ENCODE measurements at regions of chr21 and their contacts with region 1.

Region 1: GRCh38 chr21:44657635-44658540 is at the start of gene KRTAP12-3:
- DNase-seq: peak; percentile 85 to 92 (median 87)
- H3K4me3 ChIP-seq: peak within 1 kb of the TSS; percentile 4 to 32
- H3K4me3 Mint-ChIP-seq: peak within 1 kb of the TSS; percentile 73 to 83 (median 78)
- H3K27ac ChIP-seq: peak within 1 kb of the TSS; percentile 64
- H3K27ac Mint-ChIP-seq: peak within 1 kb of the TSS; percentile 94 to 99 (median 98)
- H3K4me1 ChIP-seq: peaks cover 68% of the 10 kb centered on the region
- H3K4me1 Mint-ChIP-seq: peaks cover 53 to 78% (median 64%) of the 10 kb centered on the region in 4 donors
- H3K27me3 ChIP-seq: no peaks in the 10 kb centered on the region
- H3K27me3 Mint-ChIP-seq: no peaks in the 10 kb centered on the region
- total RNA-seq, gene KRTAP12-3: not detected

Region 2: DNA sequence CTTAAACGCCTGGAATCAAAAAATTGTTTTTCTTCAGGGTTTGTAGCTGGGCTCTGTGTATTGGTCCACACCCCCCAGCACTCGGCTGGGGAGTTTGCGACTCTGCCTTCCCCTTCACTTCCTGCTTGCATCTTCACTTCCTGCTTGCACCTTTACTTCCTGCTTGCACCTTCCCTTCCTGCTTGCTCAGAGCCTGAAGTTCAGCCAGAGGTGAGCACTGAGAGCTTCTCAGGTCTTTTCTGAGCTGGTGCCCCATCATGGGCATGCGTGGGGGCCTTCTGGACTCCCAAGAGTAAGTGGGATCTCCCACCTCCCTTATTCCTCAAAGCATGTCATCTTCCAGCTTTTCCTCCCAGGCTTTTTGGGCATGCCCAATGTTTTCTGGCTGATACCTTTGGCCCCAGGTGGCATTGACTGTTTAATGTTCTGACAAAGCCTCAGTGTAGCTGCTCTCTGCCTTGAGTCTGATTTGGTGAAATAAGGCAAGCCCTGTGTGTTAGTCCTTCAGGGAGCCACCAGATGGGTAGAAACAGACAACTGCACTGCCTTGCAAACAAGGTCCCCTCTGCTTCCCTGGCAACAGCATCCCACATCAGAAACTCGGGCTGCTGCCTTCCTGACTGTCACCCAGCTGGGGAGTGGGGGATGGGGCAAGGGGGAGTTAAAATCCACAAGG is 110.1 kb before region 1 on chr21:
- CTCF ChIA-PET with region 1: interaction called, 3 read pairs
- POLR2A ChIA-PET with region 1: interaction called, 36 read pairs
- intact Hi-C with region 1: no loop called
- DNase-seq: peak; percentile 43 to 58 (median 50)
- H3K4me3 ChIP-seq: peak overlapping the region in 1 of 2 donors; percentile 35
- H3K4me3 Mint-ChIP-seq: peak overlapping the region; percentile 76 to 86 (median 82)
- H3K27ac ChIP-seq: no peak overlapping the region
- H3K27ac Mint-ChIP-seq: peak overlapping the region; percentile 82 to 95 (median 87)
- H3K4me1 ChIP-seq: peaks cover 20% of the 10 kb centered on the region
- H3K4me1 Mint-ChIP-seq: peaks cover 19 to 35% (median 28%) of the 10 kb centered on the region in 4 donors
- H3K27me3 ChIP-seq: no peaks in the 10 kb centered on the region
- H3K27me3 Mint-ChIP-seq: no peaks in the 10 kb centered on the region

Region 3: GRCh38 chr21:44583089-44583799 is 74.6 kb before region 1 on chr21:
- CTCF ChIA-PET with region 1: no interaction called
- POLR2A ChIA-PET with region 1: interaction called, 4 read pairs
- intact Hi-C with region 1: loop called (anchors 2 kb)
- DNase-seq: no peak
- H3K4me3 ChIP-seq: no peak overlapping the region
- H3K4me3 Mint-ChIP-seq: peak overlapping the region in 2 of 8 donors; percentile 12 to 33
- H3K27ac ChIP-seq: no peak overlapping the region
- H3K27ac Mint-ChIP-seq: peak overlapping the region in 2 of 7 donors; percentile 8 to 36
- H3K4me1 ChIP-seq: peaks cover 5% of the 10 kb centered on the region
- H3K4me1 Mint-ChIP-seq: peaks cover 13 to 21% (median 16%) of the 10 kb centered on the region in 4 donors
- H3K27me3 ChIP-seq: no peaks in the 10 kb centered on the region
- H3K27me3 Mint-ChIP-seq: peaks cover 11 to 15% of the 10 kb centered on the region in 2 donors

Region 4: DNA sequence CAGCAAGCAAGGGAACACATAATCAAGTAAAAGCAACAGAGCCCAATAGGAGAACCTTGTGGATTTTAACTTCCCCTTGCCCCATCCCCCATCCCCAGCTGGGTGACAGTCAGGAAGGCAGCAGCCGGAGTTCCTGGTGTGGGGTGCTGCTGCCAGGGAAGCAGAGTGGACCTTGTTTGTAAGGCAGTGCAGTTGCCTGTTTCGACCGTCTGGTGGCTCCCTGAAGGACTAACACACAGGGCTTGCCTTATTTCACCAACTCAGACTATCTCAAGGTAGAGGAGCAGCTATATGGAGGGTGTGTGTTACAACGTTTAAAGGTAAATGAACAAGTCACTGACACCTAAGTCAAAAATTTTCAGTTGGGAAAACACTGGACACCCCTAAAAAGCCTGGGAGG is 39.4 kb before region 1 on chr21:
- CTCF ChIA-PET with region 1: interaction called, 11 read pairs
- POLR2A ChIA-PET with region 1: interaction called, 89 read pairs
- intact Hi-C with region 1: loop called (anchors 1 kb)
- DNase-seq: no peak
- H3K4me3 ChIP-seq: peak overlapping the region in 1 of 2 donors; percentile 12
- H3K4me3 Mint-ChIP-seq: peak overlapping the region; percentile 39 to 81 (median 68)
- H3K27ac ChIP-seq: peak overlapping the region; percentile 40
- H3K27ac Mint-ChIP-seq: peak overlapping the region; percentile 83 to 96 (median 93)
- H3K4me1 ChIP-seq: peaks cover 43% of the 10 kb centered on the region
- H3K4me1 Mint-ChIP-seq: peaks cover 31 to 60% (median 48%) of the 10 kb centered on the region in 4 donors
- H3K27me3 ChIP-seq: no peaks in the 10 kb centered on the region
- H3K27me3 Mint-ChIP-seq: no peaks in the 10 kb centered on the region

Region 5: GRCh38 chr21:44647222-44647552 is 10.7 kb before region 1 on chr21:
- CTCF ChIA-PET with region 1: interaction called, 4 read pairs
- POLR2A ChIA-PET with region 1: interaction called, 16 read pairs
- intact Hi-C with region 1: no loop called
- DNase-seq: no peak
- H3K4me3 ChIP-seq: no peak overlapping the region
- H3K4me3 Mint-ChIP-seq: no peak overlapping the region
- H3K27ac ChIP-seq: no peak overlapping the region
- H3K27ac Mint-ChIP-seq: peak overlapping the region in 1 of 7 donors; percentile 13
- H3K4me1 ChIP-seq: no peaks in the 10 kb centered on the region
- H3K4me1 Mint-ChIP-seq: peaks cover 0 to 7% (median 4%) of the 10 kb centered on the region in 4 donors
- H3K27me3 ChIP-seq: no peaks in the 10 kb centered on the region
- H3K27me3 Mint-ChIP-seq: no peaks in the 10 kb centered on the region

Region 6: DNA sequence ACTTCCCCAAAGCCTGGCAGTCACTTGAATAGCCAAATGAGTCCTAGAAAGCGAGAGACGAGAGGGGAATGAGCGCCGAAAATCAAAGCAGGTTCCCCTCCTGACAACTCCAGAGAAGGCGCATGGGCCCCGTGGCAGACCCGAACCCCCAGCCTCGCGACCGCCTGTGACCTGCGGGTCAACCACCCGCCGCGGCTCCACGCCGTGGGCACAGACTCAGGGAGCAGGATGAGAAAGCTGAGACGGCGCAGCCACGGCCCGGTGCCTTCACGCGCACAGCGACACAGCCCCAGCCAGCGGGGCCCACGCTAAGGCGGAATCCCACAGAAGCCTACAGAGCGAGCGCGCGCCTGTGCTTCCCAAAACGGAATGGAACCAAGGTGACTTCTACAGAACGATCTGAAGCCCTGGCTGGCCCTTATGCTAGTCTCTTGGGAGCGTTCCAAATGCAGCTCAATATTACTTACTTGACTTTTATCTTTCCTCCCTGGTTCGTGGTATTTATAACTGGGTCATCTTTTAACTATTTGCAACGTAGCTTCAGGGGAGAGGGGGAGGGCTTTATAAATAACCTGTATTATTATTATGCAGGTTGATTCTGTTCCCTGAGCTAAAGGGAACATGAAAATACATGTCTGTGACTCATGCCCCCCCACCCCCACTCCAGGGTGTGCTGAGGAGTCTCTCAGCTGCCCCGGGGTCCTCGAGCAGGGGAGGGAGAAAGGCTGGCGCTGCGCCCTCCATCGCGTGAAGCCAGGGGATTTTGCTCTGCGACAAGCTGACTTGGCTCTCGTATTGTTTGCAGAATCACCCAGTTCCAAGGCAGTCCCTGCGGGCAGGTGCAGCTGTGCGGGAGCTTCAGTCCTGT is 51.8 kb after region 1 on chr21:
- CTCF ChIA-PET with region 1: no interaction called
- POLR2A ChIA-PET with region 1: interaction called, 16 read pairs
- intact Hi-C with region 1: loop called (anchors 2 kb)
- DNase-seq: peak in 4 of 5 donors; percentile 15 to 37 (median 24)
- H3K4me3 ChIP-seq: peak overlapping the region in 1 of 2 donors; percentile 24
- H3K4me3 Mint-ChIP-seq: peak overlapping the region; percentile 44 to 80 (median 68)
- H3K27ac ChIP-seq: no peak overlapping the region
- H3K27ac Mint-ChIP-seq: peak overlapping the region in 3 of 7 donors; percentile 19 to 67 (median 35)
- H3K4me1 ChIP-seq: peaks cover 39% of the 10 kb centered on the region
- H3K4me1 Mint-ChIP-seq: peaks cover 18 to 45% (median 31%) of the 10 kb centered on the region in 4 donors
- H3K27me3 ChIP-seq: peaks cover 68% of the 10 kb centered on the region
- H3K27me3 Mint-ChIP-seq: peaks cover 66 to 69% of the 10 kb centered on the region in 2 donors

Region 7: DNA sequence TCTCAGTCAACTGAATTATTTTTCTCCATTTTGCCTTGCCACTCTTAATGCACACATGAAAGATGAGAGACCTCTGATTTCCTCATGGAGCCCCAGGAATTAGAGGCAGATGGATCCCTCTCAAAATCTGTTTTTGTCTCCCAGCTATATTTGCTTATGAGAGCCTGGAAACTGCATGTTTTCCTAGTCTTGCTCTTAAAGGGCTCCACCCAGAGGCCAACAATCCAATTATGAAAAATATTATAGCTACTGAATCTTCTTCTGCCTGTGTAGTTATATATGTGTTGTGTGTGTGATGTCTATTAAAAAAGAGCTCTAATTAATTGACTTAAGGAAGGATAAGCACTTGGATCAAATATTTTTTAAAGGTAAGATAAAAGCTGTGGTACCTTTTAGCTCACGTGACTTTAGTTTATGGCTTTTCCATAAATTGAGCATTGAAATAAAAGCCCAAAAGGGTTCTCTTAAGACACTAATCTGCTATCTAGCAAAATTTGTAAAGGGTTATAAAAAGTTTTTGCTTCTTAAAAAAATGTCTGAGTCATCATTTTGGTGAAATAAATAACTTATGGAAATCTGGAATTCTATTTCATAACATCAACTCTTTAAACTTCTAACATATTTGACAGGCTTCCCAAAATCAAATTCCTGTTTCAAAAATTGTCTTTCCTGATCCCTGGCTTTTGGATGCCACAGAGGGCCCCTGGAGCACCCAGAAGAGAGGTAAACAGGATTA is 84.7 kb after region 1 on chr21:
- CTCF ChIA-PET with region 1: interaction called, 22 read pairs
- POLR2A ChIA-PET with region 1: interaction called, 11 read pairs
- intact Hi-C with region 1: no loop called
- DNase-seq: peak in 4 of 5 donors; percentile 40 to 54 (median 47)
- H3K4me3 ChIP-seq: no peak overlapping the region
- H3K4me3 Mint-ChIP-seq: no peak overlapping the region
- H3K27ac ChIP-seq: no peak overlapping the region
- H3K27ac Mint-ChIP-seq: peak overlapping the region in 4 of 7 donors; percentile 48 to 83 (median 79)
- H3K4me1 ChIP-seq: no peaks in the 10 kb centered on the region
- H3K4me1 Mint-ChIP-seq: peaks cover 4 to 12% (median 4%) of the 10 kb centered on the region in 4 donors
- H3K27me3 ChIP-seq: no peaks in the 10 kb centered on the region
- H3K27me3 Mint-ChIP-seq: peaks cover 0 to under 1% of the 10 kb centered on the region in 2 donors

Measured in CD4-positive, alpha-beta memory T cell (primary cell).